ENCODE measurements at regions of chr1 and their contacts with region 1.

Region 1: GRCh38 chr1:2322065-2322571 is 69.2 kb downstream of the MORN1 start:
- DNase-seq: no peak
- H3K4me3 ChIP-seq: no peak overlapping the region
- H3K27ac ChIP-seq: no peak overlapping the region
- H3K4me1 ChIP-seq: peaks cover 12% of the 10 kb centered on the region
- H3K27me3 ChIP-seq: peaks cover 16% of the 10 kb centered on the region
- CTCF ChIP-seq: no peak

Region 2: GRCh38 chr1:2224170-2224980 is 97.7 kb before region 1 on chr1:
- CTCF ChIA-PET with region 1: no interaction called
- dilution Hi-C with region 1: no loop called
- in situ Hi-C with region 1: no loop called
- intact Hi-C with region 1: no loop called
- DNase-seq: no peak
- H3K4me3 ChIP-seq: no peak overlapping the region
- H3K27ac ChIP-seq: no peak overlapping the region
- H3K4me1 ChIP-seq: peaks cover 5% of the 10 kb centered on the region
- H3K27me3 ChIP-seq: no peaks in the 10 kb centered on the region
- CTCF ChIP-seq: no peak

Region 3: DNA sequence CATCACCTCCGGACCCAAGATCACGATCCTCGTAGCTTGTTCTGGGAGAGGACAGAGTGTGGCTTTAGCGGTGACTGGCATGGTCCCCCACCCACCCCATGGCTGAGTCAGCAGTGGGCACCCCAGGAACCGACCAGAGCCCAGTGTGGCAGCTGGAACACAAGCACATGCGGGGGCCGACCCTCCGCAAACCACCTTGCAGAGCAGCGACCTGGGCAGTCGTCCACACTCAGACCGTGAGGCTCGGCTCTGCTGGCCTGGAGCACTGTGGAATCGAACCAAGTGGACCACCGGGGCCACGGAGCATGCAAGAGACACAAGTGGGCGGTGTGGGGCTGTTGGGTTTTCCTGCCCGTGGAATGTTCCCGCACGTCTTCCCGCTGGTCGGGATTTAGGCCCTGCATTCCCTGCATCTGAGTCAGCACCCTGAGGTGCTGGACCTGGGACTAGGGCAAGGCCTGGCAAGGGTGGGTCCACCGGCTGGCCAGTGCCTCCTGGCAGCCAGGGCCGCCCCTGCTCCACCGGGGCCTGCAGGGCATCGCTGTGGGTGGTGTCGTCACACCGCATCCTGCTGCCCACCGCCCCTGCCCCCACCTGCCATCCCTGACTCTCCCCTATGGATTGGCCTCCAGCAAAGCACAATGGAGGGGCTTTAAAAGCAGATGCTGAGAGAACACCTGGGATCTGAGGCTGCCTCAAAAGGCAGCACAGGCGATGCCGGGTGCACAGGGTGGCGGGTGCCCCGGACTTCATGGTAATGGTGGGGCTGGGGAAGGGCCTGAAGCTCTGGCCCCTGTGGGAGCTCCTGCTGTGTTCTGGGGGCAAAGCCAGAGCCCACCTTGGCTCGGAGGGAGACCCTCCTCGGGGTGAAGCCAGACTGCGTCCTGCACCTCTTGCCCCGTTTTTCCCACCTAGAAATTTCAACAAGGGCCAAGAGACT is 50.7 kb after region 1 on chr1:
- CTCF ChIA-PET with region 1: no interaction called
- dilution Hi-C with region 1: no loop called
- in situ Hi-C with region 1: no loop called
- intact Hi-C with region 1: loop called (anchors 10 kb)
- DNase-seq: peak; percentile 24
- H3K4me3 ChIP-seq: no peak overlapping the region
- H3K27ac ChIP-seq: no peak overlapping the region
- H3K4me1 ChIP-seq: peaks cover 23% of the 10 kb centered on the region
- H3K27me3 ChIP-seq: no peaks in the 10 kb centered on the region
- CTCF ChIP-seq: no peak

Region 4: DNA sequence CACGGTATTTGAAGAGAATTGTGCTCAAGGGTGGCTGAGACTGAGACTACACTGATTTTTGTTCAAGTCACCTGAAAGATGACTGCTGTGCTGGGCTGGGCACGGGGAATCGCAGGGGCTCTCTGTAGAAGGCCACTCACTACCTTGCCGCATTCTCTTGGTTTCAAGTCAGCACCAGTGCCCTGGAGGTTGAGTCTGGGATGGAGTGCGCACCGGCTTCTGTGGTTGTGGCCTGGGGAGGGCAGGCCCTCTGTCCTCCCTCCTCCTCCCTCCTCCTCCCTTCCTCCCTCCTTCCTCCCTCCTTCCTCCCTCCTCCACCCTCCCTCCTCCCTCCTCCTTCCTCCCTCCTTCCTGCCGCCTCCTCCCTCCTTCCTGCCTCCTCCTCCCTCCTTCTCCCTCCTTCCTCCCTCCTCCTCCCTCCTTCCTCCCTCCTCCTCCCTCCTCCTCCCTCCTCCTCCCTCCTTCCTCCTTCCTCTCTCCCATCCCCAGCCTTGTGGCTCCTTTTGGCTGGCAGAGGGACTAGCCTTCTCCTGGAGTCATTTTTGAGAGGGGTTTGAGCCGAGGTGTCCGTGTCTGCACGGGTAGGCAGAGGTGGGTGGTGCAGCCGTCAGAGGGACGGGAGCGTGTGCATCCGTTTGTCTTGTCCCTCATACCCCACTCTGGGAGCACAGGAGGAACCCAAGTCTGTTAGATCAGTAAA is 79.0 kb after region 1 on chr1:
- CTCF ChIA-PET with region 1: no interaction called
- dilution Hi-C with region 1: no loop called
- in situ Hi-C with region 1: no loop called
- intact Hi-C with region 1: no loop called
- DNase-seq: no peak
- H3K4me3 ChIP-seq: no peak overlapping the region
- H3K27ac ChIP-seq: no peak overlapping the region
- H3K4me1 ChIP-seq: no peaks in the 10 kb centered on the region
- H3K27me3 ChIP-seq: no peaks in the 10 kb centered on the region
- CTCF ChIP-seq: no peak